ENCODE measurements at regions of chr1 and their contacts with region 1.

Region 1: DNA sequence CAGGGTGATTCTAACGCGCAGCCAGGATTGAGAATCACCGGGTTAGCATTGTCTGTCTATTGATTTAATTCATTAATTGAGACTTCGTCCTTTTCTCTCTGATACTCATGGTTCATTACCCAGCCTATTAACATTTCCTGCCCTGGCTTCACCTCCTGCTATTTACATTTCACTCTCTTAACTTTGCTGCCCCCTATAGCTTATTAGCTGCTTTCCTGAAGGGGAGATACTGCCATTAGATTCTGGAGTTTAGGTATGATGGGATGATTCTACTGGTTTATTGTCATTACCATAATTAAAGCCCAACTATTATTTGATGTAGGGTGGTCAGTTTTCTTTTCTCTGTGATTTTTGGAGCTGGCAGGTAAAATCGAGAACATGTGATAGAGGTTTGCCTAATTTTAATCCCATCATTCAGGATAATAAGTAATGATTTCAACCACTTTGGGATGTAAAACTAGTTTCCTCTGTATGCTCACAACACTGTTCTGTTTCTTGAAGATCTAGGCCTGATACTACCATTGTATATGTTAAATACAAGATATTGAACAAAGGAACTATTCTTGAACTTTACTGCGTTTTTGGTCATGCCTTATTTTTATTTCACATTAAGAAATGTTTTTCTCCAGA is 6.4 kb downstream of the PPP2R5A start:
- DNase-seq: no peak
- H3K4me3 ChIP-seq: no peak overlapping the region
- H3K27ac ChIP-seq: no peak overlapping the region
- H3K4me1 ChIP-seq: peaks cover 41% of the 10 kb centered on the region
- H3K27me3 ChIP-seq: no peaks in the 10 kb centered on the region
- CTCF ChIP-seq: peak; percentile 69

Region 2: DNA sequence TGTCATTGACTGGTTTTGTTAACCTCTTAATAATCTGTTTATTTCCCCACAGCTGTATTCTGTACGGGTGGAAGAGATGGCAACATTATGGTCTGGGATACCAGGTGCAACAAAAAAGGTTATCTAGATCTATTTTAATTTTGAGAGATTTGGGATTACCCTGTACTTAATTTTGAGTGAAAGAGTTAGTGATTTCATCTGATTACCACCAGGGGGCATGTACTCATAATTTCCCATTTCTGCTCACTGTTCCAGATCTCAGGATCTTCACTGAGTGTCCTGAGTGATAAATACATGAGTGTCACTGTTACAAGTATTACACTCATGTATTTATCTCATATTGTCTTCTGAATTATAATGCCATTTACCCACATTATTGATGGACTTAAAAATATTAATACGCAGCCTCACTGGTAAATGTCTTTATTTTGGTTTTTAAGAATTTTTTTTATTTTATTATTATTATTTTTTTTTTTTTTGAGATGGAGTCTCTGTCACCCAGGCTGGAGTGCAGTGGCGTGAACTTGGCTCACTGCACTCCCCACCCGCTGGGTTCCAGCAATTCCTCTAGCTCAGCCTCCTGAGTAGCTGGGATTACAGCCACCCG is 228.7 kb before region 1 on chr1:
- CTCF ChIA-PET with region 1: interaction called, 3 read pairs
- POLR2A ChIA-PET with region 1: no interaction called
- intact Hi-C with region 1: loop called (anchors 2 kb)
- DNase-seq: no peak
- H3K4me3 ChIP-seq: no peak overlapping the region
- H3K27ac ChIP-seq: no peak overlapping the region
- H3K4me1 ChIP-seq: no peaks in the 10 kb centered on the region
- H3K27me3 ChIP-seq: no peaks in the 10 kb centered on the region
- CTCF ChIP-seq: peak; percentile 84

Region 3: GRCh38 chr1:212070720-212071302 is 220.8 kb before region 1 on chr1:
- CTCF ChIA-PET with region 1: interaction called, 8 read pairs
- POLR2A ChIA-PET with region 1: no interaction called
- intact Hi-C with region 1: loop called (anchors 2 kb)
- DNase-seq: no peak
- H3K4me3 ChIP-seq: no peak overlapping the region
- H3K27ac ChIP-seq: no peak overlapping the region
- H3K4me1 ChIP-seq: no peaks in the 10 kb centered on the region
- H3K27me3 ChIP-seq: no peaks in the 10 kb centered on the region
- CTCF ChIP-seq: peak; percentile 75